ENCODE measurements at regions of chr12 and their contacts with region 1.

Region 1: GRCh38 chr12:93378373-93379325 is 924 bp downstream of the NUDT4 start:
- DNase-seq: peak in 2 of 10 donors; percentile 21 to 23
- H3K4me3 ChIP-seq: peak overlapping the region; percentile 65 to 98 (median 87)
- H3K27ac ChIP-seq: peak overlapping the region; percentile 29 to 97 (median 91)
- H3K27me3 ChIP-seq: no peaks in the 10 kb centered on the region
- CTCF ChIP-seq: no peak

Region 2: DNA sequence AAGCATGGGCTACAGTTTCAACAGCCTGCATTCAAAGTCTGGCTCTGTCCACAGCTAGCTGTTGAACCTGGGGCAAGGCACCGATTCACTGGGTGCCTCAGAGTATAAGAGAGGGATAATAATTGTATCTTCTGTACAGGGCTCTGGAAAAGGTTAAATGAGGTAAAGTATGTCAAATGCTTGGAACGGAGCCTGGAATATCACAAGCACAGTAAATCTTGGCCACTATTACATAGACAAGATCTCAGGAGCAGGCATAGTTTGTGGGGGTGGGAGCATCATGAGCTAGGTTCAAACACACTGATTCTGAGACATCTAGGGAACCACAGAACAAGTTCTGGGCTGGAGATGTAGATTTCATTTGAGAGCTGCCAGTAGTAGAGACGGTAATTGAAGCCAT is 204.6 kb before region 1 on chr12:
- intact Hi-C with region 1: loop called in 1 of 2 experiments (anchors 10 kb)
- DNase-seq: no peak
- H3K4me3 ChIP-seq: no peak overlapping the region
- H3K27ac ChIP-seq: peak overlapping the region in 27 of 59 donors; percentile 5 to 88 (median 48)
- H3K27me3 ChIP-seq: no peaks in the 10 kb centered on the region
- CTCF ChIP-seq: no peak

Region 3: GRCh38 chr12:93336291-93336741 is 42.3 kb before region 1 on chr12:
- intact Hi-C with region 1: no loop called
- DNase-seq: no peak
- H3K4me3 ChIP-seq: no peak overlapping the region
- H3K27ac ChIP-seq: no peak overlapping the region
- H3K27me3 ChIP-seq: no peaks in the 10 kb centered on the region
- CTCF ChIP-seq: no peak

Measured in dorsolateral prefrontal cortex (tissue), 120 donors.